ENCODE measurements at regions of chr17 and their contacts with region 1.

Region 1: DNA sequence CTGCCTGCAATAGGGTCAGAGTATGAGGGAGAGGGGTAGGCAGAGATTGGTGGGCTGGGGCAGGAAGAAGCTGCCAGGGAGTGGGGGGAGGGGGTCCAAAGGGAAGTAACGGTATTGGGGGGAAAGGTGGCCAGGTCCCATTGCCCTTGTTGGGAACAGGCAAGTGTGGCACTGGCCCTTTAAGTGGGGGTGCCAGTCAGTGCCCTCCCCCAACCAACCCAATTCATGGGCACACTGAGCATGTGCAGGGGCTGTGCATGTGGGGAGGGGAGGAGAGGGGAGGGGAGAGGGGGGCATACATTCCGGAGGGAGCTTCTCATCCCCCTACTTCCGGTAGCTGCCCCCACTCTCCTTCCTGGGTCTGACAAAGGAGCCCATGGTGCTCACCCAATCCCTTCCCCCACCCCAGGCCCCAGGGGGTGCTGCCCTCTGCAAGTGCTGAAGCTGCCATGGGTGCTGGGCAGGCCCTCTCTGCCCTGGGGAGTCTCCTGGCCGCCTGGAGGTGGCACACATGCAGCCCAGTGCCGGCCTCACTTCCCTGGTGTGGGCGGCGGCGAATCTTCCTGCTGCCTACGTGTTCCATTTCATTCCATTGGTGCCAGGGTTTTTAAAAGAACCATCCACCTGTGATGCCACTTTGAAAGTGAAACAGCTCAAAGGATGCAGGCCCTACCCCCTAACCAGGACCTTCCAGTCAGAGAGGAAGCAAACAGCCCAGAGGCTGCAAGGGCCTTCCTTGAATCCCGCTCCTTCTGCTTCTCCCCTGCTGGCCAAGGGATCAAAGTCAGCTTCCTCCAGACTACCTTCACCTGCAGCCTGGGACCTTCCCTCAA is 11.0 kb downstream of the HEXIM2 start:
- DNase-seq: peak; percentile 96
- H3K4me3 ChIP-seq: peak overlapping the region; percentile 40 to 58 (median 49)
- H3K27ac ChIP-seq: peak overlapping the region; percentile 99
- H3K4me1 ChIP-seq: peaks cover 55% of the 10 kb centered on the region
- H3K27me3 ChIP-seq: no peaks in the 10 kb centered on the region
- CTCF ChIP-seq: peak; percentile 13 to 46

Region 2: GRCh38 chr17:45098869-45099616 is 73.6 kb before region 1 on chr17:
- CTCF ChIA-PET with region 1: no interaction called
- dilution Hi-C with region 1: no loop called
- in situ Hi-C with region 1: no loop called
- intact Hi-C with region 1: no loop called
- DNase-seq: peak; percentile 55
- H3K4me3 ChIP-seq: no peak overlapping the region
- H3K27ac ChIP-seq: peak overlapping the region; percentile 25
- H3K4me1 ChIP-seq: peaks cover 48% of the 10 kb centered on the region
- H3K27me3 ChIP-seq: no peaks in the 10 kb centered on the region
- CTCF ChIP-seq: peak; percentile 91 to 95

Region 3: GRCh38 chr17:45197555-45198334 is 25.1 kb after region 1 on chr17:
- CTCF ChIA-PET with region 1: interaction called, 21 read pairs
- dilution Hi-C with region 1: no loop called
- in situ Hi-C with region 1: no loop called
- intact Hi-C with region 1: loop called (anchors 1 kb)
- DNase-seq: peak; percentile 78
- H3K4me3 ChIP-seq: peak overlapping the region in 1 of 3 experiments; percentile 20
- H3K27ac ChIP-seq: no peak overlapping the region
- H3K4me1 ChIP-seq: peaks cover 16% of the 10 kb centered on the region
- H3K27me3 ChIP-seq: no peaks in the 10 kb centered on the region
- CTCF ChIP-seq: peak; percentile 93 to 99